ENCODE measurements at regions of chr14 and their contacts with region 1.

Region 1: GRCh38 chr14:36271939-36272907 is 48.2 kb downstream of the MBIP start:
- DNase-seq: no peak
- H3K4me3 ChIP-seq: peak overlapping the region in 2 of 4 experiments; percentile 41 to 49; a peak in 3 of 8 replicates
- H3K27ac ChIP-seq: no peak overlapping the region
- H3K4me1 ChIP-seq: peaks cover 6 to 40% (median 30%) of the 10 kb centered on the region in 4 experiments; a peak in 6 of 7 replicates
- H3K27me3 ChIP-seq: peaks cover 0 to 3% (median 0%) of the 10 kb centered on the region in 4 experiments; a peak in 1 of 7 replicates
- CTCF ChIP-seq: no peak
- EP300 ChIP-seq: no peak
- POLR2A ChIP-seq: no peak
- RAD21 ChIP-seq: no peak

Region 2: DNA sequence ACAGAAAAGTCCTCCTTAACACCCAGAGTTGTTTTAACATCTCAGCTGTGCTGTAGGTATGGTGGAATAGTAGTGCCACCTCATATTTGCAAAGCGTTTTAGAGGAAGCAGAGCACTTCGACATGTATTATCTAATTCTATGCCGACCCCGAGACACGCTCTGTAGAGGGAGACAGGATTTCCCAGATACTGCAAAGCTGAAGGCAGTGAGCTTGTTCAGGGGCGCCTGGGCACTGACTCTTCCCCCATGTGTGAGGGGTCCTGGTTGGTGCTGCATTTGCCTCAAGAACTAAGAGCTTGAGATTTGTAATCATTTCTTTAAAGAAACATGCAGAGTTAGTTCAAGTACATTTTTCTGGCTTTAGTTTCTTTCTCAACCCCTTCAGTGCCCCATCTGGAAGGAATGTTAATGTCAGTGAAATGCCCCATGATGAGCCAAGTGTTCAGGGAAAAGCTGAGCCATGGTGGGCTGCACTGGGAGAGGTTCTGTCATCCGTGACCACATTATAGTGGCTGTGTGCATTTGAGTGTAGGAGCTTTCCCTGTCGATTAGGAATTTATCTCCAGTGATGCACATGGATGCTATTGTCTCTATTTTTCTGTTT is 18.1 kb before region 1 on chr14:
- CTCF ChIA-PET with region 1: interaction called, 17 read pairs
- POLR2A ChIA-PET with region 1: interaction called, 5 read pairs
- DNase-seq: peak in 1 of 2 experiments; percentile 52
- H3K4me3 ChIP-seq: no peak overlapping the region
- H3K27ac ChIP-seq: no peak overlapping the region
- H3K4me1 ChIP-seq: no peaks in the 10 kb centered on the region
- H3K27me3 ChIP-seq: no peaks in the 10 kb centered on the region
- CTCF ChIP-seq: peak in 2 of 3 experiments; percentile 13 to 46; a peak in 2 of 4 replicates
- EP300 ChIP-seq: no peak
- POLR2A ChIP-seq: no peak
- RAD21 ChIP-seq: peak; percentile 28 to 32; a peak in 2 of 4 replicates

Region 3: GRCh38 chr14:36467332-36467731 is 195.1 kb after region 1 on chr14:
- CTCF ChIA-PET with region 1: no interaction called
- POLR2A ChIA-PET with region 1: no interaction called
- DNase-seq: no peak
- H3K4me3 ChIP-seq: no peak overlapping the region
- H3K27ac ChIP-seq: no peak overlapping the region
- H3K4me1 ChIP-seq: no peaks in the 10 kb centered on the region
- H3K27me3 ChIP-seq: no peaks in the 10 kb centered on the region
- CTCF ChIP-seq: no peak
- EP300 ChIP-seq: no peak
- POLR2A ChIP-seq: no peak
- RAD21 ChIP-seq: no peak

Measured in H1 (cell line).